ENCODE measurements at regions of chr7 and their contacts with region 1.

Region 1: GRCh38 chr7:148447221-148447849 is 143.2 kb upstream of the C7orf33 start:
- DNase-seq: no peak
- H3K4me3 ChIP-seq: no peak overlapping the region
- H3K27ac ChIP-seq: no peak overlapping the region
- H3K4me1 ChIP-seq: no peaks in the 10 kb centered on the region
- H3K27me3 ChIP-seq: no peaks in the 10 kb centered on the region
- CTCF ChIP-seq: no peak

Region 2: DNA sequence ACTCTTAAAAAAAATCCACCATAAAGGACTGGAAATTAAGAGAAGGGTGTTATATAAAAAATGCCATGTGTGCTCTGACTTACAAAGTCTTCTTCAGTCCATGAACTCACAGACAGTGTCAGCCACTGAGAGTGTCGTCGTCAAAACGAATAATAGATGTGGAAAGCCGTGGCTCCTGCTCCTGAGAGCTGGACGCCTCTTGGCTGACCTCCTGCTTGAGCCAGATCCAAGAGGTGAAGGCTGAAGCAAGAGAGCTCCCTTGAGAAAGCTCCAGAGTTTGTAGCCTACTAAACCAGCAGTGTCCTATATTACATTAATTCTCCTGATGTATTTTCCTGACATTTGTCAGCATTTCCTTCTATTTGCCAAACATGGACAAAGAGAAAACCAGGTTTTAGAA is 91.0 kb before region 1 on chr7:
- intact Hi-C with region 1: no loop called
- DNase-seq: peak in 1 of 2 donors; percentile 56
- H3K4me3 ChIP-seq: no peak overlapping the region
- H3K27ac ChIP-seq: no peak overlapping the region
- H3K4me1 ChIP-seq: no peaks in the 10 kb centered on the region
- H3K27me3 ChIP-seq: no peaks in the 10 kb centered on the region
- CTCF ChIP-seq: no peak

Region 3: GRCh38 chr7:149404825-149405224 is 957.5 kb after region 1 on chr7:
- intact Hi-C with region 1: loop called (anchors 5 kb)
- DNase-seq: no peak
- H3K4me3 ChIP-seq: no peak overlapping the region
- H3K27ac ChIP-seq: no peak overlapping the region
- H3K4me1 ChIP-seq: no peaks in the 10 kb centered on the region
- H3K27me3 ChIP-seq: no peaks in the 10 kb centered on the region
- CTCF ChIP-seq: no peak

Measured in tibial artery (tissue), 4 donors.